PC-9 (cell line): ENCODE measurements at regions of chr12 and their contacts with region 1.

Region 1: GRCh38 chr12:7498832-7499231 is 4.7 kb downstream of the CD163 start:
- DNase-seq: no peak
- H3K4me3 ChIP-seq: no peak overlapping the region
- H3K27ac ChIP-seq: no peak overlapping the region
- H3K4me1 ChIP-seq: no peaks in the 10 kb centered on the region
- H3K27me3 ChIP-seq: no peaks in the 10 kb centered on the region
- CTCF ChIP-seq: no peak

Region 2: DNA sequence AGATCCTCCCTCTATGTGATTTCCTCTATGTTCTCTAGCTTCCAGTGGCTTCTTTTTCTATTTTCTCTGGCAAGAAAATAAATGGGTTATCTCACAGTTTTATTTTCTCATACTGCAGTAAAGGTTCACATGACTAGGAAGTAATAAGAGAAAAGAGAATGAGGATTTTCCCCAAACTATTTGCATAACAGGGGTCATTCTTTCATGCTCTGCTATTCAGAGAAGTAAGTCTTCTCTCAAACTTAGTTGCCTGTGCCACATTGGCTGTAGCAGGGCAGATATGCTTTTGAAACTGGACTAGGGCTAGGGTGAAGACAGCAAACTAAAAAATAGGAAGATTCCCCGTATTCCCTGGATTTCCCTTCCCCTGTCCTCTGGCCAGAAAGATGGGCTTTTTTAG is 137.6 kb before region 1 on chr12:
- CTCF ChIA-PET with region 1: no interaction called
- POLR2A ChIA-PET with region 1: no interaction called
- intact Hi-C with region 1: no loop called
- DNase-seq: no peak
- H3K4me3 ChIP-seq: no peak overlapping the region
- H3K27ac ChIP-seq: no peak overlapping the region
- H3K4me1 ChIP-seq: no peaks in the 10 kb centered on the region
- H3K27me3 ChIP-seq: no peaks in the 10 kb centered on the region
- CTCF ChIP-seq: no peak

Region 3: GRCh38 chr12:7439579-7440505 is 59.0 kb before region 1 on chr12:
- CTCF ChIA-PET with region 1: interaction called, 10 read pairs
- POLR2A ChIA-PET with region 1: no interaction called
- intact Hi-C with region 1: no loop called
- DNase-seq: peak; percentile 65 to 95
- H3K4me3 ChIP-seq: peak overlapping the region; percentile 46
- H3K27ac ChIP-seq: no peak overlapping the region
- H3K4me1 ChIP-seq: peaks cover 4% of the 10 kb centered on the region; the same call in 1 of the 2 replicates
- H3K27me3 ChIP-seq: no peaks in the 10 kb centered on the region
- CTCF ChIP-seq: 0 out of 2 replicates have a peak, but pooled peaks have one; percentile 9

Region 4: DNA sequence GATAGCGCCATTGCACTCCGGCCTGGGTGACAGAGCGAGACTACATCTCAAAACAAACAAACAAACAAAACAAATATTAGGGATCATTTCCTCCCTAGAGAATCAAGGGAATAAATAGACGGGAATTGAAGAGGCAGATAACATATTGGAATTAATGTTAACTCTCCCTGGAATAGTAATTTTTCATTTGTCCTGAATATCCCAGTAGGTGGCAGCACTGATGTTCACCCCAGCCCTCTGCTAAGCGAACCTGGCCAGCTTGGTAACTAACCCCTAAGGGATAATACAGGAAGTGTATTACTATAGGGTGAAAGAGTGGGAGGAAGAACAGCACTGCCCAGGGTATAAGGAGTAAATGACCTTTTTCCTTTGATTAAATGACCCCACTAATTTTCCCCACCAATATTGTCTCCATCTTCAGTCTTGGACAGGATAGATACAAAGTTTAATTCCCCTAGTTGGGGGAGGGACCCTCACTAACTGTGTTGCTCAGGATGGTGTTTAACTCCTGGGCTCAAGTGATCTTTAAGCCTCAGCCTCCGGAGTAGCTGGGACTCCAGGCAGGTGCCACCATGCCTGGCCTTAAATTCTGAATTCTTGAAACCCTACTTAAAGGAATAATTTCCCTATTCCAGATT is 333.3 kb after region 1 on chr12:
- CTCF ChIA-PET with region 1: no interaction called
- POLR2A ChIA-PET with region 1: no interaction called
- intact Hi-C with region 1: no loop called
- DNase-seq: peak; percentile 48 to 56
- H3K4me3 ChIP-seq: no peak overlapping the region
- H3K27ac ChIP-seq: no peak overlapping the region
- H3K4me1 ChIP-seq: peaks cover 17% of the 10 kb centered on the region
- H3K27me3 ChIP-seq: no peaks in the 10 kb centered on the region
- CTCF ChIP-seq: peak; percentile 78